WTC11 (cell line): ENCODE measurements at regions of chr15 and their contacts with region 1.

Region 1: GRCh38 chr15:99104788-99105513 is at the start of gene SYNM:
- DNase-seq: peak; percentile 84
- ATAC-seq: peak; percentile 77
- H3K4me3 Mint-ChIP-seq: peak within 1 kb of the TSS; percentile 61
- H3K27ac Mint-ChIP-seq: no peak within 1 kb of the TSS
- H3K4me1 Mint-ChIP-seq: 0 out of 2 replicates have a peak, but pooled peaks cover 4% of the 10 kb centered on the region
- H3K27me3 Mint-ChIP-seq: peaks cover 68% of the 10 kb centered on the region
- CTCF ChIP-seq: peak; percentile 81
- total RNA-seq, gene SYNM: 2.1 to 2.2 TPM (median 2.2 TPM) in 3 replicates

Region 2: DNA sequence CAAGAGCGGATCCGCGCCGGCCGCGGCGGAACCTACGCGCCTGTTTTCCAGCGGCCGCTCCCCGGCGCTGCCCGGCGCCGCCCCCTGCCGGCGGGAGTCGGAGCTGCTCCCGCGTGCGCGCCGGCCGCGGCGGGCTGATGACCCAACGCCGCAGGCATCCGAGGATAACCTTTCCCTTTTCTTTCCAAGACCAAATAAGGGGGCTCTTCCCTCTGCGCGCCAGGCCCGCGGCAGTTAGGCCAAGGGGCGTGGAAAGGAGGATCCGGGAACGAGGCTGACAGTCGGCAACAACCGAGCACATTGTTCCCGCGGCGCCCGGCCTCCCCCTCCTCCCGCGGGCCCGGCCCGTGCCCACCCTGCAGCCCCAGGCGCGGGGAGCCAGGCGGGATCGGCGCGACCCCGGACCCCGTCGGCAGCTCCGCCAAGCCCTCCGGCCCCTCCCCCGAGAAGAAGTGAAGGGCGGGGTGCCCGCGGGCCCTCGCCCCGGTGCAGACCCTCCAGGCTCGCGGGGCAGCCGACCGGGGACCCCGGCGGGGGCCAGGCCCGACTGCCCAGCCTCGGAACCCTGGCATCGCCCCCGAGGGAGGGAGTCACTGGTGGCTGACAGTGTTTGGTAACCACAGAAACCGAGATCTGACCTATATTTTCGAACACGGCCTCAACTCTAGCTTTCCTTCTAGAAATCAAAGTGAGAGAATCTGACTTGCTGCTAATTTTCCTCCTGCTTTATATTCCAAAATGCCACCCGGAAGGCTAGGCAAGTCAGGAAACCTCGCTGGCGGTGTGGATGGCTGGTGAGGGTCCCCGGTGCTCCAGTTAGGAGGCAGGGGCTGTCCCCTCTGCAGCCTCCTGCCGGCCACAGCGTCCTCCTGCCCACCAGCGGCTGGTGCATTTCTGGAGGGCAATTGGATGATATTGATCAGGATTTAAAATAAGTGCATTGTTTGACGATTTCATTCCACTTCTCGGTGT is 45.7 kb before region 1 on chr15:
- CTCF ChIA-PET with region 1: interaction called, 11 read pairs
- POLR2A ChIA-PET with region 1: interaction called, 3 read pairs
- DNase-seq: peak; percentile 76
- ATAC-seq: peak; percentile 89
- H3K4me3 Mint-ChIP-seq: peak overlapping the region; percentile 83
- H3K27ac Mint-ChIP-seq: no peak overlapping the region
- H3K4me1 Mint-ChIP-seq: peaks cover 3% of the 10 kb centered on the region; the same call in 1 of the 2 replicates
- H3K27me3 Mint-ChIP-seq: peaks cover 31% of the 10 kb centered on the region
- CTCF ChIP-seq: peak; percentile 61

Region 3: DNA sequence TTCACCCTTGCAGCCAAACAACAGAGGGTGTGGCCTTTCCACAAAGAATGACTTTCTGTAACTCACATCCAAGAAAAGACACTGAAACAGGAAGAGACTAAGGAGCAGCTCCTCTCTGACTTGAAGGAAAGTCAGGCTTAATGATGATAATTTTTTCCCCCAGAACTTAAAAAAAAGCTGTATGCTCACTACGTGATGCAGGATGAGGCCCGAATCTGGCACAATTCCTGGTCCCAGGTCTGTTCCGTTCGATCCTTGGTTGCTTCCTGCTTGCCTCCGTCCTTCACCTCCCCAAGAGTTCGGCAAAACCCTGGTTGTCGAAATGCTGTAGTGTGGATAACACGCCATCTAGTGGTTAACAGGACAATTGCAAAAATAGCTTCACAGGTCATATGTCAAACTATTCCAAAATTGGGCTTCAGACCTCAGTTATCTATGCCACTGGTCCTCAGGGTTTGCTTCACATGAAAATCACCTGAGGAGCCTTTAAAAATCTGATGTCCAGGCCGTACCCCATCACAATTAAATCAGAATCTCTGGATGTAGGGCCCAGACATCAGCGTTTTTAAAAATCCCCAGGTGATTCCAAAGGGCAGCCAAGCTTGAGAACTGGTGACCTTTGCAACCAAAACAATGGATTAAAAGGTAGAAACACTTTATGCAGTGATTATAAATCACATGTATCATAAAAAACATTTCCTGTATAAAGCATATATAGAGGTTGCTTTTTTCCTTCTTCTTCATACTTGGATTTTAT is 28.2 kb before region 1 on chr15:
- CTCF ChIA-PET with region 1: interaction called, 11 read pairs
- POLR2A ChIA-PET with region 1: no interaction called
- DNase-seq: peak; percentile 50
- ATAC-seq: peak; percentile 94
- H3K4me3 Mint-ChIP-seq: peak overlapping the region; percentile 53
- H3K27ac Mint-ChIP-seq: no peak overlapping the region
- H3K4me1 Mint-ChIP-seq: peaks cover 13% of the 10 kb centered on the region
- H3K27me3 Mint-ChIP-seq: no peaks in the 10 kb centered on the region
- CTCF ChIP-seq: peak; percentile 86

Region 4: GRCh38 chr15:99090011-99090699 is 14.8 kb before region 1 on chr15:
- CTCF ChIA-PET with region 1: interaction called, 13 read pairs
- POLR2A ChIA-PET with region 1: no interaction called
- DNase-seq: no peak
- ATAC-seq: no peak
- H3K4me3 Mint-ChIP-seq: no peak overlapping the region
- H3K27ac Mint-ChIP-seq: peak overlapping the region; percentile 7; the same call in 1 of the 2 replicates
- H3K4me1 Mint-ChIP-seq: peaks cover 14% of the 10 kb centered on the region
- H3K27me3 Mint-ChIP-seq: no peaks in the 10 kb centered on the region
- CTCF ChIP-seq: no peak

Region 5: DNA sequence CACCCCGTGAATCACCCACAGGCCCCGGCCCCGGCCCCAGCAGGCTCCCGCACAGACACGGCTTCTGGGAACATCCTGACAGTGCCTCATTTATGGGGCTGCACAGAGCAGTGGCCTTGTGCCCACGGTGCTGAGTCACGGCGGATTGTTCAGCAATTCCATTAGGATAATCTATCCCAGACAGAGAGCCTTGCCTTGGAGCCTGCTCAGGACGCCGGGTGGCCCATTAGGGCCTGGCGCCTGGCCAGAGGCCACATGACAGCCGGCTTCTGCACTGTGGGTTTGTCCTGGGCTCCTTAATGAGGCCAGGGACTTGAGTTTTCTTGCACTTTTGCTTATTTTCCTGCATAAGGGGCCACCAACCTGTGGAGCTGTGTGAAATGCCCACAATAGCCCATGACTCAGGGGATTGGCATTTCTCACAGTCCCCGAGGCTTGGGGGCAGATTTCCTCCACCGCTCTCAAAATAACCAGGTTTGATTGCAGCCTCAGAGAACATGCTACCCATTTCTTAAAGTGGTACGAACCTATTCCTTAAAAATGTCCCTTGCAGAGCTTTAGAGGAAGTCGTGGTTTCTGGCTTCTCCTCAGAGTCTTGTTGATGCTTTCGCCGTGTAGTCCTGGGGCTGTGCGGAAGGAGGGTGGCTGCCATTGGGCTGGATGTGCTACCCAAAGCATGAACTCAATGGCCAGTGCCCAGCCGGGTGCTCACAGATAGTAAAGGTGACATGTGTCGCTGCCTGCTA is 18.9 kb after region 1 on chr15:
- CTCF ChIA-PET with region 1: interaction called, 11 read pairs
- POLR2A ChIA-PET with region 1: no interaction called
- DNase-seq: no peak
- ATAC-seq: peak; percentile 50
- H3K4me3 Mint-ChIP-seq: no peak overlapping the region
- H3K27ac Mint-ChIP-seq: peak overlapping the region; percentile 25; the same call in 1 of the 2 replicates
- H3K4me1 Mint-ChIP-seq: peaks cover 24% of the 10 kb centered on the region
- H3K27me3 Mint-ChIP-seq: no peaks in the 10 kb centered on the region; the same call in 1 of the 2 replicates
- CTCF ChIP-seq: no peak

Region 6: GRCh38 chr15:99213187-99213811 is 108.3 kb after region 1 on chr15:
- CTCF ChIA-PET with region 1: interaction called, 10 read pairs
- POLR2A ChIA-PET with region 1: no interaction called
- DNase-seq: peak; percentile 76
- ATAC-seq: peak; percentile 77
- H3K4me3 Mint-ChIP-seq: no peak overlapping the region
- H3K27ac Mint-ChIP-seq: no peak overlapping the region
- H3K4me1 Mint-ChIP-seq: no peaks in the 10 kb centered on the region
- H3K27me3 Mint-ChIP-seq: no peaks in the 10 kb centered on the region
- CTCF ChIP-seq: peak; percentile 31; the same call in 1 of the 2 replicates